ENCODE measurements at regions of chr10 and their contacts with region 1.

Region 1: DNA sequence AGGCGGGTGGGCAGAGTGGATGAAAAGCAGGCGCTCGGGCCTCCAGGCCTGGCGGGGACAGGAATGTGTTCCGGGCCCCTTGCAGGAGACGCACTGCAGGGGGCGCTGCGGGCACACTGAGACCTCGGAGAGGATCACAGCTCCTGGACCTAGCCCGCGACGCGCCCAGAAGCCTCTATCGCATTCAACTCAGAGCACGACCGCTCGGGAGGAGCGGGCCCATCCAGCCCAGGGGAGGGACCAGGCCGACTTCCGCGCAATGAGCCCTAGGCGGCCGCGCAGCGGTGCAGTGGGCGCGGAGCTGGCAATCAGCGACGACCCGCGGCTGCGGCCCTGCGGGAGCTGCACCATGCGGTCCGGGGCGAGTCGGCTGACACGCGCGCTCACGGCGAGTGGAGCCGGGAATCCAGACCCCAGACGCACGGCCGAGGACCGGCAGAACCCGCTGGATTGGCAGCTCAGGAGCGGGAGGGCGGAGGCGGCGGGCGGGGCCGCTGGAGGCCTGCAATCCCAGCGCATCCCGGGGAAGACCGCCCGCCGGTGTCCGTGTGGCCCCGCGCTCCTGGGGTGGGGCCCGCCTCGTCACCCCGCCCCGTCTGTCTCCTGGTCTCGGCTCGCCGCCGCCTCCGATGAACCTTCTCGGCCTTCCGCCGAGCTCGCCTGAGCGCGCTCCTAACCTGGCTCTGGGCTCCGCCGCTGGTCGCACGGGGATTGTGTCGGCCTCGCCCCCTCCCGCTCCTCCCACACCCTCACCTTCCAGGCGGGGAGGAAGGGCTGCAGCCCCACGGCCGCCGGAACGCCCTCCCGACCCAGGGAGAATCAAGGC is 33.5 kb upstream of the GRID1 start:
- DNase-seq: peak; percentile 94
- H3K4me3 Mint-ChIP-seq: peak overlapping the region; percentile 82
- H3K27ac Mint-ChIP-seq: peak overlapping the region; percentile 71
- H3K4me1 Mint-ChIP-seq: peaks cover 14% of the 10 kb centered on the region
- H3K27me3 Mint-ChIP-seq: peaks cover 27% of the 10 kb centered on the region

Region 2: GRCh38 chr10:86285136-86285790 is 114.8 kb before region 1 on chr10:
- CTCF ChIA-PET with region 1: no interaction called
- POLR2A ChIA-PET with region 1: no interaction called
- DNase-seq: peak; percentile 2
- H3K4me3 Mint-ChIP-seq: no peak overlapping the region
- H3K27ac Mint-ChIP-seq: no peak overlapping the region
- H3K4me1 Mint-ChIP-seq: no peaks in the 10 kb centered on the region
- H3K27me3 Mint-ChIP-seq: peaks cover 3% of the 10 kb centered on the region

Region 3: DNA sequence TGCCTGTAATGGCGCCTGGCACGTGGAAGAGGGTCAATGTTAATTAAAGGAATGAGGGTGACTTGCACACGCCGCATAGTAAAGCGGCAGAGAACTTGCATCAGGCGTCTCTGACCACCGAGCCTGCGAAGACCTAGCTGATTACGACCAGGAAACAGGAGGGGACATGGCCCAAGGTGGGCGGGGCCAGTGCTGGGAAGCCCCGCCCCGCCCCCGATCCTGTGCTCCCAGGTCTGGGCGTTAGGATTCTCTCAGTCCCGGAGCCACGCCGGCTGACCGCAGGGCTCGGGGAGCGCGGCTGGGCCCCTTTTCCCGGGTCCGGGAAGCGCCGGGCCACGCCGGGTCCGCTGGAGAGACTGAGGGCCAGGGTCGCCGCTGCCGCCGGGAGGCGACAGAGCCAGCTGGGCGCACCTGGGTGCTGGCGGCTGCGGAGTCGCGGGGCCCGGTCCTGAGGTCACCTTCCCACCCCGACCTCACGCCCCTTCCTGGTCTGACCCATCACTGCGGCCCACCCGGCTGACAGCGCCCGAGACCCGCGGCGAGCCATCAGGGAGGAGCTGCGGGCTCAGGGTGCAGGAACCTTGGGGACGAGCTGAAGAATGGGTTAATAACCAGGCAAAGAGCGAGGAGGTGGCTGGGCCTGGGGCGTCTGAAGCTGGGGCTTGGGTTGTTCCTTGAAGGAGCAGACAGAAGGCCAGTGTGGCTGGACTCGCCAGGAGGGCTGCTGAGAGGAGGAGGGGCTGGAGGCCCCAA is 10.5 kb before region 1 on chr10:
- CTCF ChIA-PET with region 1: interaction called, 11 read pairs
- POLR2A ChIA-PET with region 1: no interaction called
- DNase-seq: no peak
- H3K4me3 Mint-ChIP-seq: peak overlapping the region; percentile 68
- H3K27ac Mint-ChIP-seq: no peak overlapping the region
- H3K4me1 Mint-ChIP-seq: peaks cover 2% of the 10 kb centered on the region
- H3K27me3 Mint-ChIP-seq: peaks cover 40% of the 10 kb centered on the region

Region 4: DNA sequence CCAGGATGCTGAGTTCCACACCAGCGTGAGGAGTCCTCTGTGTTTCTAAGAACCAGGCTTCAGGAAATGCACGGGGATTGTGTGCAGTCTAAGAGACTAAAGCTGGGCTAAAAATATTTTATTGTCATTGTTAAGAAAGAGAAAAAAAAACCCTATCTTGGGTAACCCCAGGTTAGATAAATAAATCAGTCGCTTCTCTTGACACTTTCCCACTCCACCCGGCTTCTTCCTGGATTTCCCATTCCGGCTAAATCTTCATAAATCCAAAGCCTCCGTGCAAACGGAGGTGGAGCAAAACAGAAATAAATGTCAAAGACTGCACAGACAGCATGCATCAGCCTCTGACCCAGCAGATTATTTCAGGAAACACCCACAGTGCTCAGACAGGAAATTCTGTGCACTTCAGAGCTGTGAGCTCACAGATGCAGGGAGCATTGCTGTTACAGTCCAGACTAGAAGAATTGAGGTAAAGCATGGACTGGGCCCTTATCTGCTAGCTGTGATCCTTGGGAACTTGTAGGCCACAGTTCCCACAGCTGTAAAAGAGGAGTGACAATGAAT is 11.3 kb after region 1 on chr10:
- CTCF ChIA-PET with region 1: interaction called, 57 read pairs
- POLR2A ChIA-PET with region 1: interaction called, 91 read pairs
- DNase-seq: peak; percentile 49
- H3K4me3 Mint-ChIP-seq: peak overlapping the region; percentile 31
- H3K27ac Mint-ChIP-seq: peak overlapping the region; percentile 82
- H3K4me1 Mint-ChIP-seq: peaks cover 37% of the 10 kb centered on the region
- H3K27me3 Mint-ChIP-seq: peaks cover 4% of the 10 kb centered on the region

Region 5: GRCh38 chr10:86436963-86437362 is 36.9 kb after region 1 on chr10:
- CTCF ChIA-PET with region 1: interaction called, 11 read pairs
- POLR2A ChIA-PET with region 1: interaction called, 5 read pairs
- DNase-seq: no peak
- H3K4me3 Mint-ChIP-seq: no peak overlapping the region
- H3K27ac Mint-ChIP-seq: no peak overlapping the region
- H3K4me1 Mint-ChIP-seq: peaks cover 19% of the 10 kb centered on the region
- H3K27me3 Mint-ChIP-seq: no peaks in the 10 kb centered on the region

Region 6: DNA sequence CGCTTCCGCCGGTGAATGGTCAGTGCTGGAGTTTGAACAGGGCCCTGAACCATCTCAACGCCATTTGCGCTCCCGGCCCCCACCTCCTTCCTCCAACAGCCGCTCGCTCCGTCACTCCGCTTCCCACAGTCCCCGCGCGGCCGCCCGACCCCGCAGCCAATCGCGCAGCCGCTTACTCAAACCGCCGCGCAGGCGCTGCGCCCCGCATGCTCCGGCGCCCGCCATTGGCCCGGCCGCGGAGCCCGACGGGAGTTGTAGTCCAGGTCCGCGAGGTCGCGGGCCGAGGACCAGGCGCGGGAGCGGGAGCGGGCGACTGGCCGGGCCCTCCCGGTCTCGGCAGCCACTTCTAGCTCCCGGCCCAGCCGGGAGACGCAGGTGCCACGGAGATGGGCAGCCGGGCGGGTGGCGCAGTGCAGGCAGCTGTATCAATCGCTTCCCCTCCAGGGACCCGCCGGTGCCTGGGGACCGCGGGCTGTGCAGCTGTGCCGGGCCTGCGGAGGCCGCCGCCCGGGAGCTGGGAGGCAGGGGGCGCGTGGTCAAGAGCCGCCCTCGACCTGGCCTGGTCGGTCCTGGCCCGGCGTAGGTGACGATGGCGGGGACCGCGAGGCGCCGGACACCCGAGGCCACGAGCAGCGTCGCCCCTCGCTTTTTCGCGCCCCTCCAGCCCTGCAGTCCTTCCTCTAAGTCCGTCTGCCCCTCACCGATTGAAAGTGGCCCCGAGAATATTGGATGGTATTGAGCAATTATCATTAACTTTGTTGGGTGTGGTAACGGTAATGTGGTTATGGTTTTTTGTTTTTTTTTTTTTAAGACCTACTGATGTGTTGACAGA is 121.8 kb after region 1 on chr10 and contains the start of gene WAPL:
- CTCF ChIA-PET with region 1: interaction called, 12 read pairs
- POLR2A ChIA-PET with region 1: interaction called, 20 read pairs
- DNase-seq: peak; percentile 95
- H3K4me3 Mint-ChIP-seq: peak within 1 kb of the TSS; percentile 89
- H3K27ac Mint-ChIP-seq: peak within 1 kb of the TSS; percentile 89
- H3K4me1 Mint-ChIP-seq: peaks cover 60% of the 10 kb centered on the region
- H3K27me3 Mint-ChIP-seq: no peaks in the 10 kb centered on the region
- total RNA-seq, gene WAPL: 46.7 to 47.5 TPM

Region 7: DNA sequence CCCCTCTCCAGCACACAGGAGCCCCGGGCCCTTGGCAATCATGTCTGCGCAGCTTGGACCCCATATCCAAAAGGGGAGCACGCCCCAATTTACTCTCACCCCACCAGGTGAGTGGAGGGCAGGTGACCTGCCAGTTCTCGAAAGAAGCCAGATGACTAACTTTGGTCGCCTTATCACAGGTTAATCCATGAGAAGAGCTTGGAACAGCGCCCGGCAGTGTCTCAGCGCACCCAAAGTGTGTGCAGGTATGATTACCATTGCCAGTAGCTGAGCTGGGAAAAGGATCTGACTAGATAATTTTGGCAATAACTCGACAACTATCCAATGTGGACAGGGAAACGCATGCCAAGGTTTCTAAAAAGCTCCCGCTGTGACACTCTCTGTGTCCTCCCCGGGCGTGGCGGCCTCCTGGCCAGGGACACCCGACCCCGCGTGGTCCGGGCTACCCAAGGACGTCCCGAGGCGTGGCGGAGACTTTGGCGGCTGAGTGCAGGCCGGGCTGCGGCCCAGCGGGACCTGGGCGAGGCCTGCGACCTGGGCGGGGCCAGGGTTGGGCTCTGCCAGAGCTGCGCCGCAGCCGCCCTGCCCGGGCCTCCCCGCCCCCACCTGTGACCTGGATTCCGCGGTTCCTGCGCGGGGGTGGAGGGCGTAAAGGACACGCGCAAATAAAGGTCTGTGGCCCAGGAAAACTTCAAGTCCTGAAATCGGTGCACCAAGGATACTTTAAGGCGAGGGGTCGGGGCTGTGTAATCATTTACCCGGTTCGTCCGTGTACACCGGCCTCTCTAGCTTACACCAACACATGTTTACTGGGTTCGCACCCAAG is 135.2 kb after region 1 on chr10:
- CTCF ChIA-PET with region 1: interaction called, 5 read pairs
- POLR2A ChIA-PET with region 1: interaction called, 10 read pairs
- DNase-seq: peak; percentile 44
- H3K4me3 Mint-ChIP-seq: peak overlapping the region; percentile 66
- H3K27ac Mint-ChIP-seq: peak overlapping the region; percentile 52
- H3K4me1 Mint-ChIP-seq: peaks cover 21% of the 10 kb centered on the region
- H3K27me3 Mint-ChIP-seq: no peaks in the 10 kb centered on the region

Region 8: GRCh38 chr10:86585037-86585725 is 185.1 kb after region 1 on chr10:
- CTCF ChIA-PET with region 1: interaction called, 83 read pairs
- POLR2A ChIA-PET with region 1: interaction called, 24 read pairs
- DNase-seq: peak; percentile 74
- H3K4me3 Mint-ChIP-seq: no peak overlapping the region
- H3K27ac Mint-ChIP-seq: no peak overlapping the region
- H3K4me1 Mint-ChIP-seq: peaks cover 2% of the 10 kb centered on the region
- H3K27me3 Mint-ChIP-seq: no peaks in the 10 kb centered on the region